GM13976 (cell line): ENCODE measurements at regions of chr1 and their contacts with region 1.

Region 1: GRCh38 chr1:219660666-219661463 is 48.0 kb upstream of the ZC3H11B start:
- DNase-seq: peak; percentile 44
- CTCF ChIP-seq: peak; percentile 74

Region 2: DNA sequence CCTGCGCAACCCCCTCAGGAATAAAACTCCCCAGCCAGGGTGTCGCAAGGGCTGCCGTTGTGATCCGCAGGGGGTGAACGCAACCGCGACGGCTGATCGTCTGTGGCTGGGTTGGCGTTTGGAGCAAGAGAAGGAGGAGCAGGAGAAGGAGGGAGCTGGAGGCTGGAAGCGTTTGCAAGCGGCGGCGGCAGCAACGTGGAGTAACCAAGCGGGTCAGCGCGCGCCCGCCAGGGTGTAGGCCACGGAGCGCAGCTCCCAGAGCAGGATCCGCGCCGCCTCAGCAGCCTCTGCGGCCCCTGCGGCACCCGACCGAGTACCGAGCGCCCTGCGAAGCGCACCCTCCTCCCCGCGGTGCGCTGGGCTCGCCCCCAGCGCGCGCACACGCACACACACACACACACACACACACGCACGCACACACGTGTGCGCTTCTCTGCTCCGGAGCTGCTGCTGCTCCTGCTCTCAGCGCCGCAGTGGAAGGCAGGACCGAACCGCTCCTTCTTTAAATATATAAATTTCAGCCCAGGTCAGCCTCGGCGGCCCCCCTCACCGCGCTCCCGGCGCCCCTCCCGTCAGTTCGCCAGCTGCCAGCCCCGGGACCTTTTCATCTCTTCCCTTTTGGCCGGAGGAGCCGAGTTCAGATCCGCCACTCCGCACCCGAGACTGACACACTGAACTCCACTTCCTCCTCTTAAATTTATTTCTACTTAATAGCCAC is 1315.0 kb before region 1 on chr1:
- in situ Hi-C with region 1: loop called (anchors 25 kb)
- DNase-seq: peak; percentile 69
- CTCF ChIP-seq: no peak

Region 3: GRCh38 chr1:219805193-219805592 is 144.3 kb after region 1 on chr1:
- in situ Hi-C with region 1: loop called (anchors 10 kb)
- DNase-seq: no peak
- CTCF ChIP-seq: no peak